MCF 10A (cell line): ENCODE measurements at regions of chr15 and their contacts with region 1.

Region 1: DNA sequence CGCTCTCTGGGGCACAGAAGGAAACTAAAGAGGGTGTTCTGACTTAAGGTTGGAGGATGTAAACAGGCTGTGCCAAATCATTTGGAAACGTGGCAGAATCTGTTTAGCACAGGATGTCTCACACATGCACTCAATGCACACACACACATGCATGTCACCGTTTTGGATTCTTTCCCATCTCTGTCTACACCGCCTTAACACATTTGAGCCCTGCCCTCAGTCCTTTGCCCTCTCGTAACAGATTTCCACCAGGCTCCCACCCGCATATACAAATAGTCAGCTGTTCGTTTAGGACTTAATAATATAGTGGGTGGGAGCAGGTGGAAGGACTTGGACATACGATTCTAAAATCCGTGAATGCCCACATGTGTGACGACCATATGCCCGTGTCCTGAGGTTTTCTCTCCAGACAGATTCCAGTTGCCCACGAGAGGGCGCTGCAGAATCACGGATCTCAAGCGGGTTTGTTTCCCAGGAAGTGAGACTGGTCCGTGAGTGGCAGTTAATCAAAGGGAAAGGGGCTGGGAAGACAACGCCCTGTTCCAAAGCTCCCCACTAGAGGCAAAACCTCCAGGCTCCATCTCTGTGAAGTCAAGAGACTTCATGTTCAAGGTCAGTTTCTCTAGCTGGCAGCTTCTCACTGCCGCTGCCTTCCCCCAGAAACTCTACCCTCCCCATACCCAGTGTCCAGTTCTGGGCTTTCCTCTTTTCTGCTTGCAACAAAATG is 44.5 kb downstream of the NOX5 start:
- DNase-seq: peak; percentile 92
- H3K4me3 Mint-ChIP-seq: no peak overlapping the region
- H3K27ac Mint-ChIP-seq: no peak overlapping the region
- H3K4me1 Mint-ChIP-seq: no peaks in the 10 kb centered on the region
- H3K27me3 Mint-ChIP-seq: no peaks in the 10 kb centered on the region
- CTCF ChIP-seq: peak; percentile 89

Region 2: GRCh38 chr15:69017978-69018377 is 41.0 kb before region 1 on chr15:
- CTCF ChIA-PET with region 1: no interaction called
- POLR2A ChIA-PET with region 1: no interaction called
- intact Hi-C with region 1: no loop called
- DNase-seq: no peak
- H3K4me3 Mint-ChIP-seq: no peak overlapping the region
- H3K27ac Mint-ChIP-seq: no peak overlapping the region
- H3K4me1 Mint-ChIP-seq: no peaks in the 10 kb centered on the region
- H3K27me3 Mint-ChIP-seq: no peaks in the 10 kb centered on the region
- CTCF ChIP-seq: no peak

Region 3: GRCh38 chr15:69132977-69133861 is 74.2 kb after region 1 on chr15:
- CTCF ChIA-PET with region 1: interaction called, 5 read pairs
- POLR2A ChIA-PET with region 1: no interaction called
- intact Hi-C with region 1: loop called (anchors 2 kb)
- DNase-seq: peak; percentile 84
- H3K4me3 Mint-ChIP-seq: no peak overlapping the region
- H3K27ac Mint-ChIP-seq: no peak overlapping the region
- H3K4me1 Mint-ChIP-seq: peaks cover 12% of the 10 kb centered on the region
- H3K27me3 Mint-ChIP-seq: peaks cover 14% of the 10 kb centered on the region
- CTCF ChIP-seq: no peak

Region 4: DNA sequence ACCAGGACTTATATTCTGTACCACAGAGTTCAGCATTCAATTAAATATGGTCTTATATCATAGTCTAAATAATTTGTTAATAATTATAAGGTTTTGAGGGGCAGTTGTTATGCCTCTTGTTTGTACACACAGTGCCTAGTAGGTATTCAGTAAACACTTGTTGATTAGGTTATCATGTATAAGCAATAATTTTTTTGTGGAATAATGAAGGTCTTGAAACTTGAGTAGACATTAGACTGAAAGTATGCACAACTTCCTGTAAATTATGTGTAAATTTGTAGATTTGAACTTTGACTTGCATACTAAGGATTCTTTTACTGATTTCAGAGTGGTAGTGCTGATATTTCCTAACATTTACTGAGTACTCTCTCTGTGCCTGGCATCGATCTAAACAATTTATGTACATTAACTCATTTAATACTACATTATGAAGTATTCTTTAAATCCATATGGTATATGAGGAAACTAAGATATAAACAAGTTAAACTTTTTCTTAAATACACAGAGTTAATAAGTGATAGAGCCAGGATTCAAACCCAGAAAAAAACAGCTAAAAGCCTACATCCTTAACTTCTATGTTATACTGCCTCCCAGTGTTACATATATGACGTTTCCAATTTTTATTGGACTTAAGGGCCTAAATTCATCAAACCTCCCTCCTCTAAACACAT is 166.5 kb after region 1 on chr15:
- CTCF ChIA-PET with region 1: interaction called, 18 read pairs
- POLR2A ChIA-PET with region 1: no interaction called
- intact Hi-C with region 1: loop called (anchors 1 kb)
- DNase-seq: peak; percentile 25
- H3K4me3 Mint-ChIP-seq: no peak overlapping the region
- H3K27ac Mint-ChIP-seq: no peak overlapping the region
- H3K4me1 Mint-ChIP-seq: peaks cover 6% of the 10 kb centered on the region
- H3K27me3 Mint-ChIP-seq: no peaks in the 10 kb centered on the region
- CTCF ChIP-seq: peak; percentile 18

Region 5: GRCh38 chr15:69265347-69265955 is 206.5 kb after region 1 on chr15:
- CTCF ChIA-PET with region 1: interaction called, 51 read pairs
- POLR2A ChIA-PET with region 1: no interaction called
- intact Hi-C with region 1: loop called (anchors 1 kb)
- DNase-seq: peak; percentile 63
- H3K4me3 Mint-ChIP-seq: no peak overlapping the region
- H3K27ac Mint-ChIP-seq: no peak overlapping the region
- H3K4me1 Mint-ChIP-seq: no peaks in the 10 kb centered on the region
- H3K27me3 Mint-ChIP-seq: no peaks in the 10 kb centered on the region
- CTCF ChIP-seq: peak; percentile 65

Region 6: GRCh38 chr15:69468241-69469121 is 409.5 kb after region 1 on chr15:
- CTCF ChIA-PET with region 1: no interaction called
- POLR2A ChIA-PET with region 1: no interaction called
- intact Hi-C with region 1: loop called (anchors 5 kb)
- DNase-seq: peak; percentile 82
- H3K4me3 Mint-ChIP-seq: no peak overlapping the region
- H3K27ac Mint-ChIP-seq: no peak overlapping the region
- H3K4me1 Mint-ChIP-seq: peaks cover 11% of the 10 kb centered on the region
- H3K27me3 Mint-ChIP-seq: no peaks in the 10 kb centered on the region
- CTCF ChIP-seq: no peak